ENCODE measurements at regions of chr19 and their contacts with region 1.

Region 1: GRCh38 chr19:40549007-40549708 is 27.5 kb upstream of the SHKBP1 start:
- DNase-seq: peak in 2 of 3 donors; percentile 72 to 75
- ATAC-seq: peak; percentile 76
- H3K4me3 ChIP-seq: no peak overlapping the region
- H3K4me1 ChIP-seq: no peaks in the 10 kb centered on the region
- CTCF ChIP-seq: no peak

Region 2: GRCh38 chr19:40523322-40524047 is 25.7 kb before region 1 on chr19:
- intact Hi-C with region 1: no loop called
- DNase-seq: peak; percentile 71 to 87 (median 83)
- ATAC-seq: peak; percentile 99
- H3K4me3 ChIP-seq: no peak overlapping the region
- H3K4me1 ChIP-seq: peaks cover 5% of the 10 kb centered on the region
- CTCF ChIP-seq: peak; percentile 53

Region 3: GRCh38 chr19:40598121-40598917 is 49.2 kb after region 1 on chr19:
- intact Hi-C with region 1: loop called in 1 of 2 experiments (anchors 10 kb)
- DNase-seq: peak; percentile 86 to 95 (median 95)
- ATAC-seq: peak; percentile 77
- H3K4me3 ChIP-seq: no peak overlapping the region
- H3K4me1 ChIP-seq: peaks cover 42% of the 10 kb centered on the region
- CTCF ChIP-seq: peak; percentile 98

Measured in mucosa of descending colon (tissue), 3 donors.